Spleen (tissue), 13 donors: ENCODE measurements at regions of chr18 and their contacts with region 1.

Region 1: DNA sequence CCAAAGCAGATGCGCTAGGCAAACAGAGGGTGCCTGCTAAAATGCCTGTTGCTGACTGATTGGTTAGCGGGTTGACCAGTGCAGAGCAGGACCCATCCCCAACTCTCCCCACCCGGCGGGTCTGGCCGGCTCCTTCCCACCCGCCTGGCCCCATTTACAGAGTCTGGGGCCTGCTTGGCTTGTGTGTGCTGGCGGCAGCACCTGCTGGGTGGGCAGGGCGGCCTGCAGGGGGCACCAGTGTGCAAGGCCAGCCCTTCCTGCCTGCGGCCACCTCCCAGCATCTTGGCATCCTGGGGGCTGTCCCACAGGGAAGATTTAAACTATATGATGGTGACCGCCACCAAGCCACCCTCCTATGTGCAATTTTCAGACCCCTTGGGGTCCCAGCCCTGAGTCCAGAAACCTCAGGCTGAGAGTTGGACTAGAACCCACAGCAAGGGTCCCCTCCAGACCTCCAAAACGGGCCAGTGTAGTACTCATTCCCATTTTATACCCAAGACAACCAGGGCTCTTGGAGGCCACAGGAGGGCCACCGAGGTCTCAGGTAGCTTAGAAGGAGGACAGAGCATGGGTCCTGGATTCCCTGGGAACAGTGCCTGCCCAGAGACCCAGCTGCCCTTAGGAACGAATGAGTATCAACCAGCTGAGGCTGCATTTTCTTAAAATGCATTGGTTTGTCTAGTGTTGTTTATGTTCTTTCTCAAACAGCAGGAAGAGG is 173.6 kb downstream of the SMAD7 start:
- DNase-seq: peak; percentile 92
- H3K4me3 ChIP-seq: no peak overlapping the region
- H3K27ac ChIP-seq: no peak overlapping the region
- H3K4me1 ChIP-seq: peaks cover 17 to 57% (median 37%) of the 10 kb centered on the region in 6 donors
- H3K27me3 ChIP-seq: no peaks in the 10 kb centered on the region
- CTCF ChIP-seq: peak; percentile 75 to 97 (median 90)
- POLR2A ChIP-seq: no peak

Region 2: GRCh38 chr18:48680339-48681221 is 96.6 kb before region 1 on chr18:
- intact Hi-C with region 1: loop called (anchors 10 kb)
- DNase-seq: peak; percentile 75
- H3K4me3 ChIP-seq: no peak overlapping the region
- H3K27ac ChIP-seq: peak overlapping the region in 7 of 8 donors; percentile 16 to 56 (median 41)
- H3K4me1 ChIP-seq: peaks cover under 1 to 37% (median 18%) of the 10 kb centered on the region in 6 donors
- H3K27me3 ChIP-seq: no peaks in the 10 kb centered on the region
- CTCF ChIP-seq: peak in 2 of 11 experiments; percentile 12 to 22
- POLR2A ChIP-seq: no peak

Region 3: DNA sequence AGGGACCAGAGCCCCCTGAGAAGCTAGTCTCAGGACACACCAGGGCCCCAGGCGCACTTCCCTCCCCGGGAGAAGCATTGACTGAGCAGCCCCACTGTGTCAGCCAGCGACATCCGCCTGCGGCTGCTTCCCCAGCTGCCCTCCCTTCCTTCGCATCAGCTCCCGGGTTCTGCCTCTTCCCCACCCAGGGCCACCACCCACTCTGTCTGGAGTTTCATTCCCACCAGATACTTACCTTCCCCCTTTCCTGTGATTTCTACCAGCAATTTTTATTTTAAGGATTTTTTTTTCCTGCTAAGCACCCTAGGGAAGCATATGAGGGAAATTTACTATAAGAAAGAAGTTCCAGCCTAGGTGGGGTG is 74.4 kb after region 1 on chr18:
- intact Hi-C with region 1: no loop called
- DNase-seq: no peak
- H3K4me3 ChIP-seq: no peak overlapping the region
- H3K27ac ChIP-seq: peak overlapping the region in 1 of 8 donors; percentile 19
- H3K4me1 ChIP-seq: peaks cover 0 to 39% (median 20%) of the 10 kb centered on the region in 6 donors
- H3K27me3 ChIP-seq: no peaks in the 10 kb centered on the region
- CTCF ChIP-seq: no peak
- POLR2A ChIP-seq: no peak

Region 4: DNA sequence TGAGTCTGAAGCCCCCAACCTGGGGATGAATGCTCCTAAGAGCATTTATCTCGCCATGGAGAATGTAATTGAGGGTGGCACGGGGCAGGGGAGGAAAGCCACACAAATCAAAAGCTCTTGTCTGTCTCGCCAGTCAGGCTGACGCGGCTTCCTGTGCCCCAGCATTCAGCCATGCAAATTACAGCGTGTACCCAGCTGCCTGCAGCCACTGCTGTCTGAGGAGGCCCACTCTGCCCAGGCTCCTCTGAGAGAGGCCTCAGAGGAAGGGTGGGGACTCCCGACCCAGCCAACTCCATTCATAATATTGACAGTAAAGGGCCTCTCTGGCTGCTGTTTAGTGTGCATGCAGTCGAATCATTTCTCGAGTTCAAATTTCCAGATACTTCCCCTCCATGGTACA is 151.6 kb after region 1 on chr18:
- intact Hi-C with region 1: loop called (anchors 10 kb)
- DNase-seq: peak; percentile 96
- H3K4me3 ChIP-seq: peak overlapping the region in 2 of 8 donors; percentile 3 to 35
- H3K27ac ChIP-seq: peak overlapping the region; percentile 4 to 87 (median 48)
- H3K4me1 ChIP-seq: peaks cover 68 to 100% (median 97%) of the 10 kb centered on the region in 6 donors
- H3K27me3 ChIP-seq: no peaks in the 10 kb centered on the region
- CTCF ChIP-seq: no peak
- POLR2A ChIP-seq: no peak

Region 5: GRCh38 chr18:49178736-49179135 is 401.6 kb after region 1 on chr18:
- intact Hi-C with region 1: loop called (anchors 10 kb)
- DNase-seq: no peak
- H3K4me3 ChIP-seq: no peak overlapping the region
- H3K27ac ChIP-seq: no peak overlapping the region
- H3K4me1 ChIP-seq: peaks cover 0 to 47% (median 23%) of the 10 kb centered on the region in 6 donors
- H3K27me3 ChIP-seq: no peaks in the 10 kb centered on the region
- CTCF ChIP-seq: peak in 6 of 11 experiments; percentile 31 to 46 (median 43)
- POLR2A ChIP-seq: no peak